Posterior cingulate gyrus (tissue), 11 donors: ENCODE measurements at regions of chr10 and their contacts with region 1.

Region 1: GRCh38 chr10:133124357-133125211 is 35.4 kb upstream of the KNDC1 start:
- DNase-seq: peak in 9 of 10 donors; percentile 11 to 90 (median 50)

Region 2: GRCh38 chr10:132836832-132837540 is 287.6 kb before region 1 on chr10:
- intact Hi-C with region 1: loop called (anchors 10 kb)
- DNase-seq: peak in 8 of 10 donors; percentile 47 to 94 (median 66)

Region 3: GRCh38 chr10:133373104-133373624 is 248.6 kb after region 1 on chr10 and contains the start of gene ECHS1:
- intact Hi-C with region 1: no loop called
- DNase-seq: peak; percentile 87 to 99 (median 96)

Region 4: GRCh38 chr10:133442191-133442960 is 317.8 kb after region 1 on chr10:
- intact Hi-C with region 1: no loop called
- DNase-seq: peak in 3 of 10 donors; percentile 52 to 66 (median 60)